Naive thymus-derived CD8-positive, alpha-beta T cell (primary cell): ENCODE measurements at regions of chr19 and their contacts with region 1.

Region 1: DNA sequence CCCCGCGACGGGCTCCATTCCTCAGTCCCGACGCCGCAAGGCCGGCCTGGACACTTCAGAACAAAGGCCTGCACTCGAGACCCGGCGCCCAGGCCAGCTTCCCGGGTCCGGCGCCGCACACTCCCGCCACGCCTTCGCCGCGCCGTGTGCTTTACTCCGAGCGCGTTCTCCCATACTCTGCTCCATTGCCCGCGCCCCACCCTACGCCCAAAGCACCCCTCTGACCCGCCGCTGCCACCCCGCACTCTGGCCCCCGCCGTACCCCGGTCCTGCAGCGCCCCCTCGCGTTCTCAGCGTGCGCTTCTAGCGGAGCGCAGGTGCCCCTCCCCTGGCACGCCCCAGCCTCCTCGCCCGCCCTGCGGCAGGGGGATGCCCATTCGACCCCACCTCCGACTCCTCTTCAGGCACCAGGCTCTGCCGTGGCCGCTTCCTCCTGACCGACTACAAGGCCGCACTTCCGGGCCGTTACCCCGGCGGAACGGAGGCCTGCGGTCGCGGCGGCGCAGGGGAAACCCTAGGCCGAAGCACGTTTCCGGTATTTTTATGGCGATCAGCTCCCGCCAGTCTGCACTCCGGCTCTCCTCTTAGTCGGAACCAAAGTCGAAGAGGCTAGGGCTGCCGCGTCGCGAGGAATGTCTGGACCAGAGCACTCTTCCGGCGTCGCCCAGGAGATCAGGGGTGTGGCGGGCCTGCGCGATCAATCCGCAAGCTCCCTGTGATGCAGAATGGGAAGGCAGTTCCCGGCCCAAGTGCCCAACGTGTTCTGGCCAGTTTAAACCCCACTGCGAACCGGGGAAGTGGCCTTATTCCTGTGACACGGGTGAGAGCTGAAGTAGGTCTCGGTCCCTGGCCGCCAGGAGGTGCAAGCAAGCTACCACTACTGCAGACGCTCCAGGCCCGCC is at the start of gene ZBTB45:
- DNase-seq: peak; percentile 81 to 92 (median 89)
- ATAC-seq: peak; percentile 82
- H3K4me3 Mint-ChIP-seq: peak within 1 kb of the TSS; percentile 92 to 98 (median 96)
- H3K27ac Mint-ChIP-seq: peak within 1 kb of the TSS; percentile 95 to 98 (median 98)
- H3K4me1 Mint-ChIP-seq: peaks cover 28 to 45% (median 42%) of the 10 kb centered on the region in 4 donors
- H3K27me3 Mint-ChIP-seq: no peaks in the 10 kb centered on the region
- polyA plus RNA-seq, gene ZBTB45: 2.8 to 5.3 (median 3.5) TPM

Region 2: DNA sequence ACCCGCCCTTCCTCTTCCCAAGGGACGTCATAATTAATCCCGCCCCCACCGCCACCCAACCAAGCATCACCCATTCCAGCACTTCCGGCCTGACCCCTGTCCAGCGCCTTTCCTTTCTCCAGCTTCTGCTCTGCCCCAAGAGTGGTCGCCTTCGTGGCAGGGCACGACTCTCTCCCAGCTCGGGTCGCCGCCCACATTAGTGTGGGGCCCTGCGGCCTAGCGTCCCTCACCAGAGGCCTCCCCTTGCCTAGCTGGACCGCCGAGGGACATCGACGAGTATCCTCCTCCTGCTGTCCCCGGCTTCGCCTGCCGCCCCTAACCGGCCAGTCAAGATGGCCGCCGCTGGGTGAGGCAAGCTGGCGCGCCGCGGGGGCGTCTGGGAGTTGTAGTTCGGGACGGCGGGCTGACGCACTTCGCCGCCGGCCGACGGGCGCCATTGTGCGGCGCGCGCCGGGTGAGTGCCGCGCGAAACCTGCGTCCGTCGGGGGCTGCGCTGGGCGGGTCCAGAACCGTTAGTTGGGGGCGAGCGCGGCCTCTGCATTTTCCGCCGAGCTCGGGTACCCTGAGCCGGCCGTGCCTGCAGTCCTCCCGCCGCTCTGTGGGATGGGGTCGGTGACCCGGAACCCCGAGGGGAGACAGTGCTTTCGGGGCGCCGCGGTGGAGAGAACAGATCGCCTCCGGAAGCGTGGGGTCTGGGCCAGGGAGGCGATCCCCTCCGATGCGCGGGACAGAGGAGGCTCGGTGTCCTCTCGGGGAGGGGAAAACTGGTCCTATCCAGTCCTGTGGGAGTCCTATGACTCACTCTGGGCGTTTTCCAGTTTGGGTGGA is 336.4 kb before region 1 on chr19 and contains the start of gene ZNF274:
- POLR2A ChIA-PET with region 1: interaction called, 11 read pairs
- DNase-seq: peak; percentile 85 to 96 (median 94)
- ATAC-seq: peak; percentile 87 to 91
- H3K4me3 Mint-ChIP-seq: peak within 1 kb of the TSS; percentile 87 to 98 (median 90)
- H3K27ac Mint-ChIP-seq: peak within 1 kb of the TSS; percentile 96 to 100 (median 99)
- H3K4me1 Mint-ChIP-seq: peaks cover 11 to 31% (median 22%) of the 10 kb centered on the region in 4 donors
- H3K27me3 Mint-ChIP-seq: no peaks in the 10 kb centered on the region
- polyA plus RNA-seq, gene ZNF274: 26.5 to 38.7 (median 34.9) TPM

Region 3: GRCh38 chr19:58408152-58409009 is 111.2 kb before region 1 on chr19 and contains the start of gene ZNF584:
- POLR2A ChIA-PET with region 1: no interaction called
- DNase-seq: peak; percentile 88 to 97 (median 92)
- ATAC-seq: peak; percentile 92 to 97
- H3K4me3 Mint-ChIP-seq: peak within 1 kb of the TSS; percentile 94 to 98 (median 96)
- H3K27ac Mint-ChIP-seq: peak within 1 kb of the TSS; percentile 72 to 98 (median 96)
- H3K4me1 Mint-ChIP-seq: peaks cover 25 to 41% (median 35%) of the 10 kb centered on the region in 4 donors
- H3K27me3 Mint-ChIP-seq: no peaks in the 10 kb centered on the region
- polyA plus RNA-seq, gene ZNF584: 6.3 to 6.5 (median 6.4) TPM

Region 4: DNA sequence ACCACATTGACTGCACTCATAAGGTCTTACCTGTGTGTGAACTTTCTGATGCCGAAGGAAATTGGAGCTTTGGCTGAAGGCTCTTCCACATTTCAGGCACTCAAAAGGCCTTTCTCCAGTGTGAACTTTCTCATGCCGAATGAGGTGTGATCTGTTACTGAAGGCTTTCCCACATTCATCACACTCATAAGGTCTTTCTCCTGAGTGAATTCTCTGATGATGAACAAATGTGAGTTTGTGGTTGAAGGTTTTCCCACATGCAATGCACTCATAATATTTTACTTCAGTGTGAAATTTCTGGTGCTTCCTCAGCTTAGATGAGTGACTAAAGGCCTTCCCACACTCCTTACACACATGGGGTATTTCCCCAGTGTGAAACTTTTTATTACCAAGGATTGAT is 85.4 kb before region 1 on chr19:
- POLR2A ChIA-PET with region 1: no interaction called
- DNase-seq: no peak
- ATAC-seq: no peak
- H3K4me3 Mint-ChIP-seq: no peak overlapping the region
- H3K27ac Mint-ChIP-seq: no peak overlapping the region
- H3K4me1 Mint-ChIP-seq: peaks cover 11 to 16% (median 14%) of the 10 kb centered on the region in 4 donors
- H3K27me3 Mint-ChIP-seq: no peaks in the 10 kb centered on the region

Region 5: DNA sequence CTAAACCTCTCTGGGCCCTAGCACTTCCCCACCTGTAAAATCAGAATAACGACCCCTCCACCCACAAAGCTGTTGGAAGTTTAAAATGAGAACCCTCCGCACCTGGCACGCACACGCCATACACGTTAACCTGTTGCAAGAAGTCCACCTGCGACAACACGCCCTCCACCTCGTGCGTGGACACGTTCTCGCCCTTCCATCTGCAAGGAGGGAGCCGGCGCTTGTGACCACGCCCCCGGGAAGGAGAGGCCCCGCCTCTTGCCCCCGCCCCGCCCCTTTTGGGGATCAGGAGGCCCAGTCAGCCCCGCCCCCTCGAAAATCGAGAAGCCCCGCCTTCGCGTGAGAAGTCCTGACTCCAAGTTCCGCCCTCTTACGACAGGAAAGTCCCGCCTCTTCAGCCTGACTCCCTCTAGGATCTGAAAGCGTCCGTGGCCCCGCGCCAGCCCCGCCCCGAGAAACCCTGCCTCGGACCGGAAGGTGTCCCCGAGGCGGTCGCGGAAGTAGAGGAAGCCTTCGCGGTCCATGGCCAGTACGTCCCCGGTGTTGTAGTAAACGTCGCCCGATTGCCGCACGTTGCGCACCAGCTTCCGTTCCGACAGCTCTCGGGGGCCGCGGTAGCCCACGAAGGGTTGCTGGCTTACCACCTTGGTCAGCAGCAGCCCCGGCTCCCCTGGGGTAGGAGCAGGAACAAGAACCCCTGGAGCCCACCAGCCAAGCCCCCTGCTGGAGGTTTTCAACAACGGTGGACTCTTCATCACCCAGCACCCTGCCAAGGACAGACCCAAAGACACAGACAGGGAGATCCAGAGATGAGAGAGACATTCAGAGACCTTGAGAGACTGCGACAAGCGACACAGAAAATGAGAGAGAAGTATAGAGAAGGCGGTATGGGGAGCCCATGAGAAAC is 20.3 kb before region 1 on chr19:
- POLR2A ChIA-PET with region 1: interaction called, 23 read pairs
- DNase-seq: peak; percentile 82 to 98 (median 90)
- ATAC-seq: peak; percentile 89 to 90
- H3K4me3 Mint-ChIP-seq: peak overlapping the region; percentile 89 to 96 (median 94)
- H3K27ac Mint-ChIP-seq: peak overlapping the region; percentile 86 to 99 (median 96)
- H3K4me1 Mint-ChIP-seq: peaks cover 14 to 30% (median 22%) of the 10 kb centered on the region in 4 donors
- H3K27me3 Mint-ChIP-seq: no peaks in the 10 kb centered on the region

Region 6: DNA sequence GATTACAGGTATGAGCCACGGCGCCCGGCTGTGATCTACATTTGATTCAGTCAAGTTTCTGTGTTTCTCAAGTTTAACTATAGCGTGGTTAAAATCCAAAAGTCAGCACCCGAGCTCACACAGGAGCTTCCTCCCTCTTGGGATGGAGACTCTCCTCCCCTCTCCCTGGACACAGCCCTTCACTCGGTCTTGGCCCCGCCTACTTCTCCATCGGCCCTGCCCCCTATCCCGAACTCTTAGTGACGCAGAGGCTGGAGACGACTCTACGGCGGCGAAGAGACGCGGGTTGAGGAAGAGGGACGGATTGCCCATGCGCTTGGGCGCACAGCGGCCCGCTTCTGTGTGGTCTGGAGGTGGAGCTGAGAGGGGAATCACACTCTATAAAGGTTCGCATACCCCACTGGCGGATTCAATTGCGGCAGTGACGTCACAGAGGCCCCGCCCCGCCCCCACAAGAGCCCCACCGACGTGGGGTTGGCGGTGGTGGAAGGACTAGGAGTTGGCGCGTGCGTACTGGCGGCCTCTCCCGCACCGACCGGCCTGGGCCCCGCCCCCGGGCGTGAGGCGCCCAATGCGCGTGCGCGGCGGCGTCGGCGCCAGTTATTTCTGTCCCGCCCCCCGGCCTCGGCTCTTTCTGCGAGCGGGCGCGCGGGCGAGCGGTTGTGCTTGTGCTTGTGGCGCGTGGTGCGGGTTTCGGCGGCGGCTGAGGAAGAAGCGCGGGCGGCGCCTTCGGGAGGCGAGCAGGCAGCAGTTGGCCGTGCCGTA is 24.4 kb after region 1 on chr19 and contains the start of gene TRIM28:
- POLR2A ChIA-PET with region 1: interaction called, 94 read pairs
- DNase-seq: peak; percentile 99 to 100 (median 100)
- ATAC-seq: peak; percentile 90 to 92
- H3K4me3 Mint-ChIP-seq: peak within 1 kb of the TSS; percentile 91 to 97 (median 96)
- H3K27ac Mint-ChIP-seq: peak within 1 kb of the TSS; percentile 97 to 100 (median 99)
- H3K4me1 Mint-ChIP-seq: peaks cover 26 to 38% (median 32%) of the 10 kb centered on the region in 4 donors
- H3K27me3 Mint-ChIP-seq: peaks cover 0 to 11% (median 4%) of the 10 kb centered on the region in 5 donors
- polyA plus RNA-seq, gene TRIM28: 55.7 to 114 (median 62.7) TPM

Region 7: GRCh38 chr19:58572818-58573657 is 53.4 kb after region 1 on chr19 and contains the start of gene MZF1:
- POLR2A ChIA-PET with region 1: interaction called, 73 read pairs
- DNase-seq: peak; percentile 96 to 100 (median 100)
- ATAC-seq: peak; percentile 70 to 76
- H3K4me3 Mint-ChIP-seq: peak within 1 kb of the TSS; percentile 88 to 100 (median 98)
- H3K27ac Mint-ChIP-seq: peak within 1 kb of the TSS; percentile 99 to 100 (median 100)
- H3K4me1 Mint-ChIP-seq: peaks cover 29 to 55% (median 45%) of the 10 kb centered on the region in 4 donors
- H3K27me3 Mint-ChIP-seq: peaks cover 0 to 5% (median 0%) of the 10 kb centered on the region in 5 donors
- polyA plus RNA-seq, gene MZF1: 9.1 to 12.7 (median 11.7) TPM